Heart right ventricle (tissue), 16 donors: ENCODE measurements at regions of chr13 and their contacts with region 1.

Region 1: GRCh38 chr13:32472194-32472621 is 44.3 kb upstream of the N4BP2L1 start:
- DNase-seq: no peak
- ATAC-seq: peak in 5 of 8 donors; percentile 5 to 51 (median 37)
- H3K4me3 ChIP-seq: no peak overlapping the region
- H3K27ac ChIP-seq: peak overlapping the region in 8 of 10 donors; percentile 33 to 57 (median 49)
- H3K4me1 ChIP-seq: peaks cover 5 to 47% (median 30%) of the 10 kb centered on the region in 9 donors
- H3K27me3 ChIP-seq: no peaks in the 10 kb centered on the region
- CTCF ChIP-seq: no peak

Region 2: GRCh38 chr13:32538621-32539246 is 66.5 kb after region 1 on chr13 and contains the start of gene N4BP2L2:
- intact Hi-C with region 1: loop called in 1 of 10 experiments (anchors 10 kb)
- DNase-seq: peak; percentile 87 to 97
- ATAC-seq: peak; percentile 97 to 99 (median 99)
- H3K4me3 ChIP-seq: peak within 1 kb of the TSS; percentile 59 to 93 (median 74)
- H3K27ac ChIP-seq: peak within 1 kb of the TSS; percentile 65 to 98 (median 92)
- H3K4me1 ChIP-seq: peaks cover 4 to 46% (median 40%) of the 10 kb centered on the region in 9 donors
- H3K27me3 ChIP-seq: no peaks in the 10 kb centered on the region
- CTCF ChIP-seq: peak in 6 of 9 donors; percentile 27 to 66 (median 60)
- total RNA-seq, gene N4BP2L2: 113 to 162 (median 134) TPM

Region 3: GRCh38 chr13:32581177-32581786 is 109.1 kb after region 1 on chr13:
- intact Hi-C with region 1: loop called in 1 of 10 experiments (anchors 10 kb)
- DNase-seq: no peak
- ATAC-seq: no peak
- H3K4me3 ChIP-seq: no peak overlapping the region
- H3K27ac ChIP-seq: no peak overlapping the region
- H3K4me1 ChIP-seq: peaks cover 0 to 7% (median 5%) of the 10 kb centered on the region in 9 donors
- H3K27me3 ChIP-seq: no peaks in the 10 kb centered on the region
- CTCF ChIP-seq: peak; percentile 14 to 75 (median 63)